HepG2 (cell line): ENCODE measurements at regions of chr7 and their contacts with region 1.

Region 1: GRCh38 chr7:76302347-76303201 is at the start of gene HSPB1:
- DNase-seq: peak; percentile 65
- ATAC-seq: peak; percentile 57
- H3K4me3 ChIP-seq: peak within 1 kb of the TSS; percentile 62 to 81 (median 64)
- H3K27ac ChIP-seq: peak within 1 kb of the TSS; percentile 27
- H3K4me1 ChIP-seq: peaks cover 68% of the 10 kb centered on the region
- H3K27me3 ChIP-seq: no peaks in the 10 kb centered on the region
- CTCF ChIP-seq: no peak; the same call in 1 of the 2 replicates
- EP300 ChIP-seq: no peak
- POLR2A ChIP-seq: peak in 1 of 2 experiments; percentile 67; a peak in 2 of 4 replicates
- RAD21 ChIP-seq: no peak
- total RNA-seq, gene HSPB1: 21.0 and 22.7 TPM in 2 replicates

Region 2: GRCh38 chr7:76122516-76123239 is 179.9 kb before region 1 on chr7:
- CTCF ChIA-PET with region 1: no interaction called
- POLR2A ChIA-PET with region 1: no interaction called
- in situ Hi-C with region 1: no loop called
- intact Hi-C with region 1: no loop called
- DNase-seq: no peak
- ATAC-seq: no peak
- H3K4me3 ChIP-seq: no peak overlapping the region; a peak in 1 of 6 replicates
- H3K27ac ChIP-seq: peak overlapping the region; percentile 49
- H3K4me1 ChIP-seq: peaks cover 82% of the 10 kb centered on the region
- H3K27me3 ChIP-seq: no peaks in the 10 kb centered on the region
- CTCF ChIP-seq: no peak
- EP300 ChIP-seq: no peak
- POLR2A ChIP-seq: no peak
- RAD21 ChIP-seq: no peak

Region 3: DNA sequence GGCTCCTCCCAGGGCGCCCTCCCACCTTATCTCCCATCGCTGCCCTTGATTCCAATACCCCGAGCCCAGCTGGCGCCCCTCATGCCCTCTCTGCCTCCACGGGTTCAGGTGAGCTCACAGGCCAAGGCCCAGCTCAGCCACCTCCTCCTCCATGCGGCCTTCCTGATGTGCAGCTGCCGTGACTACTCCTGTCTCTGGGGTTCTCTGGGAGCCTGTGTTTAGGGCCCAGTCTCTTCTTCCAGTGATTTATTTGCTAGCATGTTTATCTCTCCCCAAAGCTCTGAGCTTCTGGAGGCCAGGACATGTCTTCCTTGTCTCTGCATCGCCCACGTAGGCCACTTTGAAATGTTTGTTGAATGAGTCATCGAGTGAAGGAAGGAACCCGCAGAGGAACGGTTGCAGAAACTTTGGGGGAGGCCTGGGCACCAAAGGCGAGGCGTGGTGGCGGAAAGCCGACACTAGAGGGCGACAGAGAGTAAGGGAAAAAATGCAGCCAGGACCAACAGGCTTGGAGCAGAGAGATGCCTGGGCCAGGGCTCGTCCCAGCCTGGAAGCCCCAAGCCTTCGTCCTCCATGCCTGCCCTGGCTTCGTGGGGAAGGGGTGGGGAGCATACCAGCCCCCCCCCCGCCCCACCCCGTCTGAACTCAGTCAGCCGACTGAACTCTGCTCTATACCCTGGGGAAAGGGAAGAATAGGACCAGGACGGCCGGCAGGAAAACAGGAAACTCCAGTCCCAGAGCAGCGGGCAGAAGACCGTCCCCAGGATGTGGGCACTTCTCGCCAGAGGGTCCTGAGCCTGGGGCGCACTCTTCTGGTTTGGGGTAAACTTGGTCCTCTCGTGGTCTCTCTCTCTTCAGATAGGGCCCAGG is 11.0 kb before region 1 on chr7:
- CTCF ChIA-PET with region 1: no interaction called
- POLR2A ChIA-PET with region 1: interaction called, 56 read pairs
- in situ Hi-C with region 1: no loop called
- intact Hi-C with region 1: loop called (anchors 2 kb)
- DNase-seq: peak; percentile 88
- ATAC-seq: peak; percentile 85
- H3K4me3 ChIP-seq: peak overlapping the region; percentile 65 to 75 (median 66)
- H3K27ac ChIP-seq: peak overlapping the region; percentile 89
- H3K4me1 ChIP-seq: peaks cover 66% of the 10 kb centered on the region
- H3K27me3 ChIP-seq: peaks cover 0 to 6% of the 10 kb centered on the region in 2 experiments; a peak in 3 of 5 replicates
- CTCF ChIP-seq: peak; percentile 97
- EP300 ChIP-seq: peak in 1 of 2 experiments; percentile 49; a peak in 2 of 4 replicates
- POLR2A ChIP-seq: peak; percentile 53 to 74
- RAD21 ChIP-seq: peak; percentile 97